Calu3 (cell line): ENCODE measurements at regions of chr10 and their contacts with region 1.

Region 1: DNA sequence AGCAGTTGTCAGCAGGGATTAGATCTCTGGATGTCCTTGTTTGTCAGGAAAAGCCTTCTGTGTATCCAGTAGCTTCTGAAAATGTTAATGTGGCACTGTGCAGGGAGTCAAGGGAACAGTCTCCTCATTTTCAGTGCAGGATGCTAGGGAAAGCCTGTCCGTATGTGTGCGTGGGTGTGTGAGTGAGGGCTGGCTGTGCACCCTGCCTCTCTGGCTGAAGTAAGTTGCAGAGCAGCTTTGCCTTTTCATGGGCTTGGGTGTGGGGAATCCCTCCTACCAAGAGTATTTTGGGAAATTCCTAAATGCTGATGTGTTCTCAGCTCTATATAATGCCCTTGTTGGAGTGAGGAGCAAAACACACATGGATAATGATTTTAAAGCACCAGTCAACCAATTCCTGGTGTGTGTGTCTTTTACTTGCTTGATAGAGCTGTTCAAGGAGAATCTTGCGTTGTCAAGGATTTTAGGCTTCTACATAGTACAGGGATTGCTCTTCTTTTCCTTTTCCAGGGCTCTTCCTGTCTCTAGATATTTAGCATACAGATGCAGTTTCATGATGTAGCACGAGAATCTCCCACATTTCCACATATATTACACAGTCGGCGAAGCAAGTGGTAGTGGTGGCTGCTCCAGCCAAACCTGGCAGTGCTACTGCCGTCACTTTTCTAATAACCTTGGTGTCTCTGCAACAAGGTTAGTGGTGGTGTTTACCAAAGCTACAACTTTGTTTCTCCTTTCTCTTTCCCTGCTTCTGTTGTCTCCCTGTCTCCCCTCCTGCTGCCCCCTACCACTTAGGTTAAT is 92.8 kb downstream of the MCU start:
- DNase-seq: peak; percentile 80
- H3K4me3 Mint-ChIP-seq: peak overlapping the region; percentile 45
- H3K27ac Mint-ChIP-seq: peak overlapping the region; percentile 69
- H3K4me1 Mint-ChIP-seq: peaks cover 58% of the 10 kb centered on the region
- H3K27me3 Mint-ChIP-seq: no peaks in the 10 kb centered on the region
- CTCF ChIP-seq: no peak

Region 2: GRCh38 chr10:72736176-72736827 is 48.4 kb before region 1 on chr10:
- CTCF ChIA-PET with region 1: interaction called, 4 read pairs
- intact Hi-C with region 1: loop called (anchors 5 kb)
- DNase-seq: peak; percentile 13
- H3K4me3 Mint-ChIP-seq: no peak overlapping the region
- H3K27ac Mint-ChIP-seq: peak overlapping the region; percentile 69
- H3K4me1 Mint-ChIP-seq: peaks cover 63% of the 10 kb centered on the region
- H3K27me3 Mint-ChIP-seq: no peaks in the 10 kb centered on the region
- CTCF ChIP-seq: no peak

Region 3: DNA sequence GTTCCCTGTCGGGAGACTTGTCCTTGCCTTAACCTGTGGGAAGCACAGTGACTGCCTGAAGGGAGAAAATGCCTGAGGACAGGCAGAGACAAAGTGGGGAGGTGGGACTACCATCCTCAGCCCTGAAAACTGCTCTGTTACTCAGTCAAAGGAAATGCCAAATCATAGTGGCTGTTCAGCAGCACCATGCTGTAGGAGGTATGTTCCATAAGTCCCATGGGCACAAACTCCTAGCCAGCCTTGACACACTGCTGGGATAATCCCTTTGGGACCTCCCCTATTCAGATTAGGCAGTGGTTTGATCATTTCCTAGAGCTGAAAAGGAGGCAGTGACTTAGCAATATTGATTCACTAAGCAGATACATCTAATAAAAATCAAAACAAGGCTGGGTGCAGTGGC is 12.7 kb before region 1 on chr10:
- CTCF ChIA-PET with region 1: no interaction called
- intact Hi-C with region 1: no loop called
- DNase-seq: no peak
- H3K4me3 Mint-ChIP-seq: no peak overlapping the region
- H3K27ac Mint-ChIP-seq: no peak overlapping the region
- H3K4me1 Mint-ChIP-seq: no peaks in the 10 kb centered on the region
- H3K27me3 Mint-ChIP-seq: no peaks in the 10 kb centered on the region
- CTCF ChIP-seq: no peak

Region 4: GRCh38 chr10:72800000-72800740 is 15.4 kb after region 1 on chr10:
- CTCF ChIA-PET with region 1: interaction called, 4 read pairs
- intact Hi-C with region 1: loop called (anchors 2 kb)
- DNase-seq: no peak
- H3K4me3 Mint-ChIP-seq: no peak overlapping the region
- H3K27ac Mint-ChIP-seq: no peak overlapping the region
- H3K4me1 Mint-ChIP-seq: peaks cover 41% of the 10 kb centered on the region
- H3K27me3 Mint-ChIP-seq: no peaks in the 10 kb centered on the region
- CTCF ChIP-seq: no peak

Region 5: GRCh38 chr10:72826346-72826745 is 41.6 kb after region 1 on chr10:
- CTCF ChIA-PET with region 1: no interaction called
- intact Hi-C with region 1: loop called (anchors 5 kb)
- DNase-seq: no peak
- H3K4me3 Mint-ChIP-seq: no peak overlapping the region
- H3K27ac Mint-ChIP-seq: no peak overlapping the region
- H3K4me1 Mint-ChIP-seq: peaks cover 38% of the 10 kb centered on the region
- H3K27me3 Mint-ChIP-seq: no peaks in the 10 kb centered on the region
- CTCF ChIP-seq: no peak

Region 6: DNA sequence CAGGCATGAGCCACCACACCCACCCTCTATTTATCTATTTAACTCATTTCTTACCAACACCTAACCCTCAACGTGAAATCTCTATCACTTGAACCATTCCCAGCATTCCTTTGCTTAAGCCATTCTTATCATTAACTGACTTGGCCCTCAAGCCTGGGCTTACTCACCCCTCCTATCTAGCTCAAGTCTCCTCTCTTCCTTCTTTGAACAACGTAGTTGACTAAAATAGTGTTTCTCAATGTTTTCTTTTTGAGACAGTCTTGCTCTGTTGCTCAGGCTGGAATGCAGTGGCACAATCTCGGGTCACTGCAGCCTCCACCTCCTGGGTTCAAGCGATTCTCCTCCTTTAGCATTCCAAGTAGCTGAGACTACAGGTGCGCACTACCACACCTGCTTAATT is 622.1 kb after region 1 on chr10:
- CTCF ChIA-PET with region 1: no interaction called
- intact Hi-C with region 1: no loop called
- DNase-seq: no peak
- H3K4me3 Mint-ChIP-seq: no peak overlapping the region
- H3K27ac Mint-ChIP-seq: no peak overlapping the region
- H3K4me1 Mint-ChIP-seq: peaks cover 38% of the 10 kb centered on the region
- H3K27me3 Mint-ChIP-seq: no peaks in the 10 kb centered on the region
- CTCF ChIP-seq: no peak